Dendritic cell treated with granulocyte-macrophage colony-stimulating factor and Interleukin-4, amounts not matched to agents 40 ng/mL and 50 ng/mL, for 4 days (primary cell): ENCODE measurements at regions of chr21 and their contacts with region 1.

Region 1: GRCh38 chr21:33324291-33325221 is at the start of gene IFNAR1:
- H3K4me3 Mint-ChIP-seq: no peak within 1 kb of the TSS
- H3K27ac Mint-ChIP-seq: no peak within 1 kb of the TSS
- H3K4me1 Mint-ChIP-seq: peaks cover 21% of the 10 kb centered on the region
- H3K27me3 Mint-ChIP-seq: no peaks in the 10 kb centered on the region

Region 2: GRCh38 chr21:33286600-33287456 is 37.7 kb before region 1 on chr21:
- intact Hi-C with region 1: no loop called
- H3K4me3 Mint-ChIP-seq: no peak overlapping the region
- H3K27ac Mint-ChIP-seq: peak overlapping the region; percentile 70
- H3K4me1 Mint-ChIP-seq: peaks cover 19% of the 10 kb centered on the region
- H3K27me3 Mint-ChIP-seq: no peaks in the 10 kb centered on the region

Region 3: DNA sequence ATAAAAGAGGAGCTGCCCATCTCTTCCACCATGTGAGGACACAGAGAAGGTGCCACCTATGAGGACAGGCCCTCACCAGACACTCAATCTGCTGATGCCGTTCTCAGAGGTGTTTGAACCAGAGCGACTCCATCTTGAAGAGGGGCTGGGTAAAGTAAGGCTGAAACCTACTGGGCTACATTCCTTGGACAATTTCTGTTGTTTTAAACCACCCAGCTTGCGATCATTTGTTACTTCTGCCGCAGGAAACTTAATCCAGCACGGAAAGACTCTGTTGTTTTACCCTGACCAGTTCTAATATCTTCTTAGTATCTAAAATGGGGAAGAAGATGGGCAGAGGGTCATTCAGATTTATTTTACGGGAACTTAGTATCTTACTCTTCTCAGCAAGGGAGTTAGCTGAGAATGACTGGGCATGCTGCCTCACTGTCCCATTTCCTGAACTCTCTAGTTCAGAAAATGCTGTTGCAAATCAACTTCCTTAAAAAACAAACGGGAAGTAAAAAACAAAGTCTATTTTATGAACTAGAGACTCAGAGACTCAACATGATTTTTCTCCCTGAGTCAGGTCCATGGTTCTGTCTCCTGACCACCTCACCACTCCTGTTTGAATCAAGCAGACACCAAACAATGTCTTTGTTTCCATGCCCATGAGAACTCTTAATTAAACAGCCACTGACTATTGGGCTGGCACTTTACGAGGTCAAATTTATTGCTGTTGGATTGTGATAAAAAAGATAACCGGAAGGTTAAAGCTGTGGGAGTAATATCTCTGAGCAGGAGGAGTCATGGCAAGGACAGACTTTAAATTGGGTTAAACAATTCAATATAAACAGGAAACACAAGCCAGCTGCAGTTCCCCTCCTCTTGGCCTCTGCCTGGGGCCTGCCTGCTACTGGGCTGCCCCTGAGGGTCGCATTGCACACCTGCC is 23.6 kb before region 1 on chr21:
- intact Hi-C with region 1: loop called (anchors 1 kb)
- H3K4me3 Mint-ChIP-seq: peak overlapping the region; percentile 59
- H3K27ac Mint-ChIP-seq: peak overlapping the region; percentile 96
- H3K4me1 Mint-ChIP-seq: peaks cover 91% of the 10 kb centered on the region
- H3K27me3 Mint-ChIP-seq: no peaks in the 10 kb centered on the region

Region 4: GRCh38 chr21:33412832-33413519 is 88.4 kb after region 1 on chr21:
- intact Hi-C with region 1: no loop called
- H3K4me3 Mint-ChIP-seq: peak overlapping the region; percentile 33
- H3K27ac Mint-ChIP-seq: peak overlapping the region; percentile 65
- H3K4me1 Mint-ChIP-seq: peaks cover 82% of the 10 kb centered on the region
- H3K27me3 Mint-ChIP-seq: no peaks in the 10 kb centered on the region